CD8-positive, alpha-beta T cell (primary cell): ENCODE measurements at regions of chr22 and their contacts with region 1.

Region 1: DNA sequence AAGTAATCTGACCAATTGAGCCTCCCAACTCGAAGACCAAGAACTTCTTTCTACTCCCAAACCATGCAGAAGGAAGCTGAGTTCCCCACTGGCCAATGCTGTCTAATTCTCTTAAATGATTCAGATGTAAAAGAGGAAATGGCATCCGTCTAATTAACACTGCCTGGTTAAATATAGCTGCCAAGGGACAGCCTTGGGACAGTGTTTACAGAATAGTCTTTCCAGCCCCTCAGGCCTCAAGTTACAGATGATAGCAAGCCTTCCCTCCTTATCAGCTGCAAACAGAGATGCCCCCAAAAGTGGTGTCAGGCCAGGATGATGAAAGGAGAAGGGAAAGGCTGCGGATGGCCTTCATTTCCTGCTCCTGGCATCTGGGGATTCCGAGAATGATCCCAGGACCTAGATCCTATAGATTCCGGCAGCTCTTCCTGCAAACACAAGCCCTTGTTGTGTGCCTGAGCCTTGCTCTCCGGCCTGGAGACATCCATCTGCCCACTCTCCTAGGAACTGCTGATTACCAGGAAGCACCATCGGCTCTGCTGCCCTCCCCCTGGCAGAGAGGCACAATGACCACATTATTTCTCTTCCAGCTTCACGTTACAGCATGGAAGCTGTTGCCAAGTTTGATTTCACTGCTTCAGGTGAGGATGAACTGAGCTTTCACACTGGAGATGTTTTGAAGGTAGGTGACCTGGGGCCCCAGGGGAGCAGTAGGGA is 13.5 kb upstream of the TMA7B start:
- DNase-seq: peak in 1 of 9 experiments; percentile 40
- ATAC-seq: no peak
- H3K4me3 ChIP-seq: no peak overlapping the region
- H3K4me3 Mint-ChIP-seq: peak overlapping the region; percentile 66
- H3K27ac ChIP-seq: peak overlapping the region; percentile 4 to 52
- H3K27ac Mint-ChIP-seq: no peak overlapping the region
- H3K4me1 ChIP-seq: peaks cover 100% of the 10 kb centered on the region
- H3K4me1 Mint-ChIP-seq: peaks cover 98% of the 10 kb centered on the region
- H3K27me3 ChIP-seq: no peaks in the 10 kb centered on the region
- H3K27me3 Mint-ChIP-seq: no peaks in the 10 kb centered on the region
- CTCF ChIP-seq: no peak

Region 2: GRCh38 chr22:39908737-39909136 is 37.9 kb before region 1 on chr22:
- CTCF ChIA-PET with region 1: interaction called, 22 read pairs
- POLR2A ChIA-PET with region 1: interaction called, 10 read pairs
- intact Hi-C with region 1: no loop called
- DNase-seq: peak in 5 of 9 experiments; percentile 48 to 72 (median 53)
- ATAC-seq: peak; percentile 51
- H3K4me3 ChIP-seq: peak overlapping the region; percentile 57 to 77
- H3K4me3 Mint-ChIP-seq: peak overlapping the region; percentile 97
- H3K27ac ChIP-seq: peak overlapping the region; percentile 20 to 80
- H3K27ac Mint-ChIP-seq: peak overlapping the region; percentile 97
- H3K4me1 ChIP-seq: peaks cover 61% of the 10 kb centered on the region
- H3K4me1 Mint-ChIP-seq: peaks cover 79% of the 10 kb centered on the region
- H3K27me3 ChIP-seq: no peaks in the 10 kb centered on the region
- H3K27me3 Mint-ChIP-seq: no peaks in the 10 kb centered on the region
- CTCF ChIP-seq: no peak

Region 3: GRCh38 chr22:39917776-39918495 is 28.7 kb before region 1 on chr22:
- CTCF ChIA-PET with region 1: interaction called, 22 read pairs
- POLR2A ChIA-PET with region 1: interaction called, 11 read pairs
- intact Hi-C with region 1: no loop called
- DNase-seq: peak in 1 of 9 experiments; percentile 51
- ATAC-seq: no peak
- H3K4me3 ChIP-seq: peak overlapping the region; percentile 15 to 46
- H3K4me3 Mint-ChIP-seq: peak overlapping the region; percentile 80
- H3K27ac ChIP-seq: peak overlapping the region; percentile 48 to 80
- H3K27ac Mint-ChIP-seq: peak overlapping the region; percentile 97
- H3K4me1 ChIP-seq: peaks cover 94% of the 10 kb centered on the region
- H3K4me1 Mint-ChIP-seq: peaks cover 91% of the 10 kb centered on the region
- H3K27me3 ChIP-seq: no peaks in the 10 kb centered on the region
- H3K27me3 Mint-ChIP-seq: no peaks in the 10 kb centered on the region
- CTCF ChIP-seq: no peak

Region 4: GRCh38 chr22:39927544-39927943 is 19.1 kb before region 1 on chr22:
- CTCF ChIA-PET with region 1: interaction called, 17 read pairs
- POLR2A ChIA-PET with region 1: interaction called, 18 read pairs
- intact Hi-C with region 1: no loop called
- DNase-seq: peak in 2 of 9 experiments; percentile 11 to 52
- ATAC-seq: no peak
- H3K4me3 ChIP-seq: peak overlapping the region; percentile 56 to 76
- H3K4me3 Mint-ChIP-seq: no peak overlapping the region
- H3K27ac ChIP-seq: peak overlapping the region; percentile 29 to 49
- H3K27ac Mint-ChIP-seq: no peak overlapping the region
- H3K4me1 ChIP-seq: peaks cover 82% of the 10 kb centered on the region
- H3K4me1 Mint-ChIP-seq: peaks cover 40% of the 10 kb centered on the region
- H3K27me3 ChIP-seq: no peaks in the 10 kb centered on the region
- H3K27me3 Mint-ChIP-seq: no peaks in the 10 kb centered on the region
- CTCF ChIP-seq: peak; percentile 20

Region 5: GRCh38 chr22:39932918-39933649 is 13.6 kb before region 1 on chr22:
- CTCF ChIA-PET with region 1: interaction called, 17 read pairs
- POLR2A ChIA-PET with region 1: interaction called, 18 read pairs
- intact Hi-C with region 1: loop called in 1 of 2 experiments (anchors 1 kb)
- DNase-seq: peak in 7 of 9 experiments; percentile 27 to 85 (median 72)
- ATAC-seq: peak; percentile 66
- H3K4me3 ChIP-seq: peak overlapping the region in 1 of 2 experiments; percentile 35
- H3K4me3 Mint-ChIP-seq: peak overlapping the region; percentile 77
- H3K27ac ChIP-seq: peak overlapping the region; percentile 72
- H3K27ac Mint-ChIP-seq: no peak overlapping the region
- H3K4me1 ChIP-seq: peaks cover 98% of the 10 kb centered on the region
- H3K4me1 Mint-ChIP-seq: peaks cover 54% of the 10 kb centered on the region
- H3K27me3 ChIP-seq: no peaks in the 10 kb centered on the region
- H3K27me3 Mint-ChIP-seq: no peaks in the 10 kb centered on the region
- CTCF ChIP-seq: peak; percentile 62

Region 6: GRCh38 chr22:39960791-39961746 is 14.4 kb after region 1 on chr22:
- CTCF ChIA-PET with region 1: interaction called, 8 read pairs
- POLR2A ChIA-PET with region 1: interaction called, 14 read pairs
- intact Hi-C with region 1: loop called in 1 of 2 experiments (anchors 1 kb)
- DNase-seq: peak; percentile 15 to 90 (median 69)
- ATAC-seq: peak; percentile 82
- H3K4me3 ChIP-seq: no peak overlapping the region
- H3K4me3 Mint-ChIP-seq: peak overlapping the region; percentile 19
- H3K27ac ChIP-seq: peak overlapping the region; percentile 15 to 80
- H3K27ac Mint-ChIP-seq: peak overlapping the region; percentile 92
- H3K4me1 ChIP-seq: peaks cover 60% of the 10 kb centered on the region
- H3K4me1 Mint-ChIP-seq: peaks cover 69% of the 10 kb centered on the region
- H3K27me3 ChIP-seq: no peaks in the 10 kb centered on the region
- H3K27me3 Mint-ChIP-seq: no peaks in the 10 kb centered on the region
- CTCF ChIP-seq: no peak